ENCODE measurements at regions of chr20 and their contacts with region 1.

Region 1: DNA sequence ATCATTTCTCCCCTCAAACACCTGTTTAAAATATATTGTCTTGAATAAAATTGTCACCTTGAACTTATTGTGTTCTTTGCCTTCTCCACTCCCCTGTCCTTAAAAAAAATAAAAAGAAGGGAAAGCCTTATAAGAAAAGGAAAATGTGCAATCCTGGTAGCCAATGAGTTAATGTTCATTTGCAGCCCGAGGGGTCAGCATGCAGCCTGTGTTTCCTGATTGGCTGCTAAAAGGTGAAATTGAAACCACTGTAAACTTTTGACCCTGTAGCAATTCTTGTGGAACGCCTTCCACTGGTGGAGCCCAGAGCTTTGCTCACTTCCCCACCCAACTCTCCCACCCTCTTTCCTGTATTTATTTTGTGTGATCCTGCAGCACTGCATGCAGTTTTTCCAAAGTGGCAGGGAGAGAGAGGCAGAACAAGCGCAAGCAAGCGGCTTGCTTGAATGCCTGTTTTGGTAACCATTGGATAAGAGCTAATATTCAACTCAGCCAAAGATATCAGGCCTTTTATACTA is 74.9 kb downstream of the NCOA3 start:
- DNase-seq: peak; percentile 80
- H3K4me3 ChIP-seq: no peak overlapping the region
- H3K27ac ChIP-seq: peak overlapping the region; percentile 46
- H3K4me1 ChIP-seq: peaks cover 11% of the 10 kb centered on the region
- H3K27me3 ChIP-seq: no peaks in the 10 kb centered on the region
- CTCF ChIP-seq: no peak

Region 2: DNA sequence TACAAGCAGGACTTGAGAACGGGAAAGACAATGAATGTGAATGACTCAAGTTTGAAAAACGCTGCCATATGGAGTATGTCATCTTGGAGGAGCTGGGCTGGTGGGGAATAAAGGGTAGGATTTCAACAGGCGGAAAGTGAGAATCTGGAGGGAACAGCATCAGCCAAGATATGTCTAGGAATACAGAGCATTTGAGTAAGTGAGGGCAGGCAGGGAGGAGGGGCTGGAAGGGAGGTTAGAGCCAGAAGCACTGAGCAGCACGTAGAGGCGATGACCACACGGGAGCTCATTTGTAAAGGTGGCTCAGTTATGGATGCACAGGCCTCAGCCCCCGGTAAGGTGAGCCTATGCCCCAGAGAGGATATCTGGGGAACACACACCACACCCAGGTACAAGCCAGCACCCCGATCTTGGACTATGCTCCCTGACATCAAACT is 335.2 kb before region 1 on chr20:
- intact Hi-C with region 1: no loop called
- DNase-seq: no peak
- H3K4me3 ChIP-seq: no peak overlapping the region
- H3K27ac ChIP-seq: no peak overlapping the region
- H3K4me1 ChIP-seq: no peaks in the 10 kb centered on the region
- H3K27me3 ChIP-seq: no peaks in the 10 kb centered on the region
- CTCF ChIP-seq: no peak

Region 3: GRCh38 chr20:47501483-47502270 is 74.9 kb before region 1 on chr20 and contains the start of gene NCOA3:
- intact Hi-C with region 1: loop called (anchors 10 kb)
- DNase-seq: peak; percentile 96
- H3K4me3 ChIP-seq: peak within 1 kb of the TSS; percentile 73
- H3K27ac ChIP-seq: peak within 1 kb of the TSS; percentile 81
- H3K4me1 ChIP-seq: no peaks in the 10 kb centered on the region
- H3K27me3 ChIP-seq: no peaks in the 10 kb centered on the region
- CTCF ChIP-seq: peak; percentile 47
- total RNA-seq, gene NCOA3: 17.1 to 24.2 TPM

Region 4: GRCh38 chr20:47704755-47705493 is 128.3 kb after region 1 on chr20:
- intact Hi-C with region 1: no loop called
- DNase-seq: no peak
- H3K4me3 ChIP-seq: no peak overlapping the region
- H3K27ac ChIP-seq: no peak overlapping the region
- H3K4me1 ChIP-seq: no peaks in the 10 kb centered on the region
- H3K27me3 ChIP-seq: no peaks in the 10 kb centered on the region
- CTCF ChIP-seq: no peak

Measured in colonic mucosa (tissue), 4 donors.